ENCODE measurements at regions of chr18 and their contacts with region 1.

Region 1: DNA sequence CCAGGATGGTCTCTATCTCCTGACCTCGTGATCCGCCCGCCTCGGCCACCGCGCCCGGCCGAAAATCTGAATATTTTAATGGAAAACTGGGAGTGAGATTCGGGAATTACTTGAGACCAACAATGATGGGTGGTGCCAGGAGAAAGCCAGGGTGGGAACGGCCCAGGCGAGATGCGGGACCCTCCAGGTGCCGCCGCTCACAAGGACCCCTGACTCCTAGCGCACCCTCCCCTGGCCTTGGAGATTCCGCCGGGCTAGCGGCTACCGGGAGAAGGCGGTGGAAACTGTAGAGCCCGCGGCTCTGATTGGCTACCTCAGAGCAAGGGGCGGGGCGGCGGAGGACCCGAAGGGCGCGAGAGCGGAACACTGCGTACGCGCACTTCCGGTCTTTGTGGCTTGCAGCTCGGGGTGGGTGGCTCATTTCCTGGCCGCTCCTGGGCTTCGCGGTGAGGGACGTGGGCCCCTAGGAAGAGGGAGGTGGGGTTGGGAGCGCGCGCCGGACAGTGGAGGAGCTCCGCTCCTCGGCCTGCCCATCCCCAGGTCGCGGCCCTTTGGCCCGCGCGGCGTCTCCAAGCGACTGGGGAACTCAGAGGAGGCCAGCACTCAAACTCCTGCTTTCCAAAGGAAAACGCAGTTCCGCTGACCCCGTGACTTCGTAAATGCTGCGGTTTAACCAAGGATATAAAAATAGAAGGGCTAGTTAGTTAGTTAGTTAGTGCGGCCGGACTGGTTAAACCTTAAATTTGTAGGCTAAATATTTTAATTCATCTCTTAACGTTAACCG is at the start of gene ZNF397:
- DNase-seq: peak; percentile 81
- H3K4me3 ChIP-seq: peak within 1 kb of the TSS; percentile 70 to 92 (median 82)
- H3K27ac ChIP-seq: peak within 1 kb of the TSS; percentile 91 to 99 (median 96)
- H3K4me1 ChIP-seq: peaks cover 0 to 19% (median 9%) of the 10 kb centered on the region in 3 donors
- H3K27me3 ChIP-seq: no peaks in the 10 kb centered on the region
- CTCF ChIP-seq: peak in 1 of 6 experiments; percentile 10
- POLR2A ChIP-seq: peak in 3 of 4 donors; percentile 80 to 95 (median 92)
- total RNA-seq, gene ZNF397: 10.4 to 24.2 (median 15.5) TPM

Region 2: DNA sequence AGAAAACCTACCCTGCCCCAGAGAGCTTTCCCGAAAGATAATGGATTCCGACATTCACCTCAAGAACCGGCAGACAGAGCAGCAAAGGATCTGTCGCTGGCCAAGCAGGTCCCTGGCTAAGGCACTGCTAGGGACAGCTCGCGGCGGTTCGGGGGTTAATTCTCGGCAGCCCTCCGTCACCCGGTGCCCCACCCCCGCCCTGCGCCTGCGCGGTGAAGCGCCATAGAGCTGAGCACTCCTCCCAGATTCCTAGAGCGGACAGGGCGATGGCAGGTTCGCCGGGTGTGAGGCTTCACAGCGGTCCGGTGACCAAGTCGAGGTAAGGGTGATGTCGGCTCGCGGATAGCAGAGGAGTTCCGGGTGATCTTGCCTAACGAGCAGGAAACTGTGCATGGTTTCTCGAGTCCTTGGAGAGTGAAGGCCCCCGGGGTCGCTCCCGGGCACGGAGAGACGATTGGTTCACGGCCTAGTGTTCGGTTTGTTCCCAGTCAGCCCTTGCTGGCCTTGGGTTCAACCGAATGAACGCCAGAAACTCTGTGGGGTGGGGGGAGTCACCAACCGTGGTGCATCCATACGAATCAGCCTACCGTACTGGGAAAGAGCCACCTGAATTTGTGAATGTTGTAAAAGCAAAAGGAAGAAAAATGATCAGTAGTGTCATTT is 49.3 kb after region 1 on chr18 and contains the start of gene ZSCAN30:
- intact Hi-C with region 1: loop called (anchors 5 kb)
- DNase-seq: peak; percentile 54
- H3K4me3 ChIP-seq: peak within 1 kb of the TSS; percentile 65 to 88 (median 74)
- H3K27ac ChIP-seq: peak within 1 kb of the TSS; percentile 87 to 93 (median 91)
- H3K4me1 ChIP-seq: peaks cover 6 to 43% (median 17%) of the 10 kb centered on the region in 3 donors
- H3K27me3 ChIP-seq: no peaks in the 10 kb centered on the region
- CTCF ChIP-seq: peak in 1 of 6 experiments; percentile 26
- POLR2A ChIP-seq: peak in 3 of 4 donors; percentile 62 to 72 (median 66)
- total RNA-seq, gene ZSCAN30: 4.1 to 14.9 (median 8.0) TPM

Region 3: DNA sequence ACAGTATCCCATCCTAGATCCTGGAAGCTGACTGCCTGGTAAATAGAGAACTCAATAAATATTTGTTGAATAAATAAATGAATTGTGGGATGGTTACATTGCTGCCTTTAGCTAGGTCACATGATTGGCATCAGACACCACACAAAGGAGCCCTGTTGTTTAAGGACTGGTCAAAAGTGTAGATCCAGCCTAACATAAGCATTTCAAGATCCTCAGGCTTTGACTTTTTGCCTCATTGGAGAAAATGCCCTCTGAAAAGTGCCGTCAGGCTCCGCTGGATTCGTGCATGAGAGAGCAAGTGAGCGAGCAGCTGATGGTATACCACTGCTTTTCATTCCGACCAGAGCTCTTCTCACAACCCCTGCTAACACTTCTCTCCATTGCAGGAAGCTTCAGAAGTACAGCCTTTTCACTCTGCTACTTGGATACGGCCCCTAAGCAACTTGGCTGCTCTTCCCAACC is 104.6 kb after region 1 on chr18:
- intact Hi-C with region 1: loop called (anchors 5 kb)
- DNase-seq: no peak
- H3K4me3 ChIP-seq: no peak overlapping the region
- H3K27ac ChIP-seq: no peak overlapping the region
- H3K4me1 ChIP-seq: peaks cover 5 to 44% (median 12%) of the 10 kb centered on the region in 3 donors
- H3K27me3 ChIP-seq: no peaks in the 10 kb centered on the region
- CTCF ChIP-seq: no peak
- POLR2A ChIP-seq: no peak